MCF 10A (cell line): ENCODE measurements at regions of chr11 and their contacts with region 1.

Region 1: DNA sequence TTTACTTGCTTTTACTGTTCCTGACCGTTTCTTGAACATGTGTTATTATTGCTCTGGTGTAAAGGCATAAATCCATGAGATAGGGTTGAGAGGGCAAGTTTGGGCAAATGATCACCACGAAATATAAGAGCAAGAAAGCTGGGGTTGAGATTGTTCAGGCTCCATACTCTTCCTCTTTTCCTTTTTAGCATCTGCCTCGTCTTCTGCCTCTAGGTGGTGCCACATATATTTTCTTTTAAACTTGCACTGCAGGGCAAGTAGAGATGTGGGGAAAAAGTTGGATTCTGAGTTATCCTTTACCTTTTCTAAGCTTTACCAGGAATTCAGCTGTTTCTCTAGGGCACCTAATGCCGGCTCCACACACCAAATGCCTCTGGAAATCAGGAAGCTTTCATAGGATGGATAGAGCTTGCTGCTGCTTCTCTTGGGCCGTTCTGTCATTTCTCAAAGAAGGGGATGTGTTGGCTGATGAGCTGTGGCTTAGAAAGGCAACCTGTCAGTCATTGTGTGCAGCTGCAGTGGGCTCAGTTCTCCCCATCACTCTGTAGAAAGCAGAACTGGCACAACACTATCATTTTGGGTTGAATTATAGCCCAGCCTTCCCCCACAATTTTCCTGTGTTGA is 98.2 kb downstream of the LDLRAD3 start:
- DNase-seq: peak; percentile 27
- H3K4me3 Mint-ChIP-seq: no peak overlapping the region
- H3K27ac Mint-ChIP-seq: peak overlapping the region; percentile 59
- H3K4me1 Mint-ChIP-seq: peaks cover 12% of the 10 kb centered on the region
- H3K27me3 Mint-ChIP-seq: no peaks in the 10 kb centered on the region
- CTCF ChIP-seq: peak; percentile 51

Region 2: DNA sequence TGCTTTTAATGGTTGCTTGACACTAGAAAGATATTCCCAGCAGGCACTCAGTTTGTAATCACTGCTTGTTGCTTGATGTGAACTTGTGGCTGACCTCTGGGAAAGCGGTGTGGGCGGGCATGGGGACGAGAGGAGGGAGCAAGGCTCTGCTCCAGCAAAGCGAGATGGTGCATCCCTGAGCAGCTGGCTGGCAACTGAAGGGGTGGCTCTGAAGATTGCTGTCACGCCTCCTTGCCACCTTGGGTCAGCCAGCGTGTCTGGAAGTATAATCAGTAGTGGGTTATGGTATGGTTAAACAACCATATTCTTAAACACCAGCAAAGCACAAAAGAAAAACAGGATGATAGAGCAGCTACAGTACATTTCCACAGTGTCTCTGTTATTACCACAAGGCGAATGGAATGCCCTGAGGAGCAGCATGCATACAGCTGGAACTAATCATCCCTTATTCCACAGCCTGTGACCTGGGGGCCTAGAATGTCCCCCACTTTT is 255.0 kb before region 1 on chr11:
- CTCF ChIA-PET with region 1: no interaction called
- POLR2A ChIA-PET with region 1: no interaction called
- intact Hi-C with region 1: no loop called
- DNase-seq: no peak
- H3K4me3 Mint-ChIP-seq: no peak overlapping the region
- H3K27ac Mint-ChIP-seq: no peak overlapping the region
- H3K4me1 Mint-ChIP-seq: peaks cover 30% of the 10 kb centered on the region
- H3K27me3 Mint-ChIP-seq: no peaks in the 10 kb centered on the region
- CTCF ChIP-seq: no peak

Region 3: GRCh38 chr11:36023922-36024321 is 18.2 kb before region 1 on chr11:
- CTCF ChIA-PET with region 1: interaction called, 27 read pairs
- POLR2A ChIA-PET with region 1: interaction called, 4 read pairs
- intact Hi-C with region 1: no loop called
- DNase-seq: peak; percentile 24
- H3K4me3 Mint-ChIP-seq: no peak overlapping the region
- H3K27ac Mint-ChIP-seq: no peak overlapping the region
- H3K4me1 Mint-ChIP-seq: peaks cover 39% of the 10 kb centered on the region
- H3K27me3 Mint-ChIP-seq: no peaks in the 10 kb centered on the region
- CTCF ChIP-seq: no peak

Region 4: GRCh38 chr11:36056160-36056751 is 14.2 kb after region 1 on chr11:
- CTCF ChIA-PET with region 1: interaction called, 10 read pairs
- POLR2A ChIA-PET with region 1: interaction called, 4 read pairs
- intact Hi-C with region 1: no loop called
- DNase-seq: peak; percentile 61
- H3K4me3 Mint-ChIP-seq: no peak overlapping the region
- H3K27ac Mint-ChIP-seq: no peak overlapping the region
- H3K4me1 Mint-ChIP-seq: peaks cover 8% of the 10 kb centered on the region
- H3K27me3 Mint-ChIP-seq: no peaks in the 10 kb centered on the region
- CTCF ChIP-seq: peak; percentile 49

Region 5: DNA sequence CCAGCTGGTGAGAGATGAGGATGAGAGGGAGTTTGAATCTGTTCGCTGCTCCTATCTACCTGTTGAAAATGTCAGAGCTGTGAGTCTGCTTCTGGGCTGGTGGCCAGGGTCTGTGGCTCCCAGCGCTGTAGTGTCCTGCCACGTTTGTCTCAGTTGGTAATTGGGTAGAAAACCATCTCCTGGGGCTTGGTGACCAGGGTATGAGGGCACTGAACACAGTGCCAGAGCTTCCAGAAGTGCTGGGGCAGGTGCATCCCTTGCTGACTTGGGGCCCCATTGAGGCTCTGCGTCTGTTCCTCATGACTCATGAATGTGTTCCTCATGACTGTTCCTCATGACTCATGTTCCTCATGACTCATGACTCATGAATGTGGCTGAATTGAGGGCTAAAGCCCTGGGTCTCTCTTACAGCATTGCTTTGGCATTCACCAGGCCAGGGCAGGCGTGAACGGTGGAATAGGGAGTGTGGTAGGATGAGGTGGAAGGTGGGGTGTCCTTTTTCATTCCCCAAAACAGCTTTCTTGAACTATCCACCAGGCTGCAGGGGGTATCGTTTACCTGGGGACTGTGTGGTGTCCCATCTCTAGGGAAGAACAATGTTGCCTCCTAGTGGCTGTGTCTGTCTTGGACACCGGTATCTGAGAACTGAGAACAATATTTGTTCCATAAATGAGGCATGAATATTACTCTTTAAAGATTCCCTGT is 107.6 kb after region 1 on chr11:
- CTCF ChIA-PET with region 1: interaction called, 4 read pairs
- POLR2A ChIA-PET with region 1: no interaction called
- intact Hi-C with region 1: loop called (anchors 1 kb)
- DNase-seq: peak; percentile 100
- H3K4me3 Mint-ChIP-seq: peak overlapping the region; percentile 29
- H3K27ac Mint-ChIP-seq: peak overlapping the region; percentile 82
- H3K4me1 Mint-ChIP-seq: peaks cover 42% of the 10 kb centered on the region
- H3K27me3 Mint-ChIP-seq: no peaks in the 10 kb centered on the region
- CTCF ChIP-seq: peak; percentile 80